Posterior vena cava (tissue), 2 donors: ENCODE measurements at regions of chr4 and their contacts with region 1.

Region 1: GRCh38 chr4:127747883-127748282 is 17.7 kb downstream of the SLC25A31 start:
- DNase-seq: no peak

Region 2: DNA sequence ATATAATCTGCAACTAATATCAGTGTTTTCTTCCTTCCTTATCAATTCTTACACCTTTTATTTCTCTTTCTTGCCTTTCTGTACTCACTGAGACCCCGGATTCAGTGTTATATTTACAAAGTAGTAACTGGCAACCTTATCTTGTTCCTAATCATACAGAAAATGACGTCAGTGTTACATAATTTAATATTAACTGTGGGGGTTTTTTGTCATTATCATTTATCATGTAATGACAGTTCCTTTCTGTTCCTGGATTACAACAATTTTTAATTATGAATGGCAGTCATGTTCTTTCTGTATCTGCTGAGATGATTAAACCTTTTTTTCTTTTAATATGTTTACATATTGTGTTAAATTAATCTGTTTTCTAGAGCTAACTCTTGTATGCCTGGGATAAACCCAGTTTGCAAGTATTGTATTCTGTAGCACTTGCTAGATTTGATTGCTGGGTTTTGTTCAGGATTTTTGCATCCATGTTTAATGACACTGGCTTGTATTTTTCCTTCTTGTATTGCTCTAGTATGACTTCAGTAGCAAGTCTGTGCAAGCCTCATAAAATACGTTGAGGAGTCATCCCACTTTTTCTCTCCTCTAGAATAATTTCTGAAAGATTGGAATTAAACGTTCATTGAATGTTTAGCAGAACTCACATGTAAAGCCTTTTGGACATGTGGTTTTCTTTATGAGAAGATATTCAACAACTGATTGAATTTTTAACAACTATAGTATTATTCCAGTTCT is 23.8 kb after region 1 on chr4:
- intact Hi-C with region 1: loop called in 1 of 2 experiments (anchors 1 kb)
- DNase-seq: no peak